ENCODE measurements at regions of chr2 and their contacts with region 1.

Region 1: DNA sequence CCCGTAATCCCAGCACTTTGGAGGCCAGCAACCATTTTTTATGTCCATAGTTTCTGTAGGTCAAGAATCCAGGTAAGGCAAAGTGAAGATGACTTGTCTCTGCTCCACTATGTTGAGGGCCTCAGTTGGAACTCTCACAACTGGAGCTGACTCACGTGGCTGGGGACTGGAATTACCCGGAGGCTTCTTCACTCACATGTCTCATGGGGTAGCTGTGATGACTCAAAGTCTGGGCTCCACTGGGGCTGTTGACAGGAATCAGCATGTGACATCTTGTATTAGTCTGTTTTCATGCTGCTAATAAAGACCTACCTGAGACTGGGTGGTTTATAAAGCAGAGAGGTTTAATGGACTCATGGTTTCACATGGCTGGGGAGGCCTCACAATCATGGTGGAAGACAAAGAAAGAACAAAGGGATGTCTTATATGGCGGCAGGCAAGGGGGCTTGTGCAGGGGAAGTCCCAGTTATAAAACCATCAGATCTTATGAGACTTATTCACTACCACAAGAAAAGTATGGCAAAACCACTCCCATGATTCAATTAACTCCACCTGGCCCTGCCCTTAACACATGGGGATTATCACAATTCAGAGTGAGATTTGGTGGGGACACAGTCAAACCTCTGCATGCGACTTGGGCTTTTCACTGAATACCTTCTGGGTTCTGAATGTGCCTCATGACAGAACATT is 7.8 kb upstream of the PPP1R1C start:
- DNase-seq: peak in 1 of 2 experiments; percentile 15
- H3K4me3 ChIP-seq: no peak overlapping the region
- H3K27ac ChIP-seq: no peak overlapping the region
- H3K4me1 ChIP-seq: no peaks in the 10 kb centered on the region
- H3K27me3 ChIP-seq: no peaks in the 10 kb centered on the region
- CTCF ChIP-seq: no peak

Region 2: DNA sequence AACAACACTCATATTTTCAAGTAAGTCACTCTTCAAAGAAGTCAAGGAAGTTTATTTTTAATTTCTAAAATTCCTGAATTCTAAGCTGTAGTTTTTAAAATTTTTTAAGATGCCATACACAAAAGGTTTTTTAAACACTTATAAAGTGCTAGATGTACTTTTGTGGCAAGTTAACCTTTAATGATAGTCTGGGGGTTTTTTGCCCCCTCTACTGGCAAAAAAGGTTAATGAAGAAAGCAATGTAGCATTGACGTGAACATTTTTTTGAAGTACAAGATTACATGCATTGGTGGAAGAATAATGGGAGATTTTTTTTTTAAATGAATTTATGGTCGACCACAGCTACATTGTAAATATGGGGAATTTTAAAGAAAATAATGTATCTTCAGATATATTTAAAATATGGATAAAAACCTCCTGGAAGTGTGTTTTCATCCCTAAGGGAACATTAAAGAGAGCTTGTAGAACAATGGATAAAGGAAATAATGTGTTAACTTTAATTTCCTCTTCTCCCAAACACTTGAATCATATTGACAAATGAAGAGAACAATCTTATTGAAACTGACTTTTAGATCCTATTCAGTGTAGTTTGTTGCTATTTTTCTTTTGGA is 73.7 kb before region 1 on chr2:
- CTCF ChIA-PET with region 1: no interaction called
- POLR2A ChIA-PET with region 1: no interaction called
- intact Hi-C with region 1: no loop called
- DNase-seq: peak; percentile 15 to 60
- H3K4me3 ChIP-seq: no peak overlapping the region
- H3K27ac ChIP-seq: no peak overlapping the region
- H3K4me1 ChIP-seq: 0 out of 2 replicates have a peak, but pooled peaks cover 9% of the 10 kb centered on the region
- H3K27me3 ChIP-seq: no peaks in the 10 kb centered on the region
- CTCF ChIP-seq: peak; percentile 86

Region 3: GRCh38 chr2:181916726-181917718 is 60.8 kb before region 1 on chr2:
- CTCF ChIA-PET with region 1: no interaction called
- POLR2A ChIA-PET with region 1: interaction called, 10 read pairs
- intact Hi-C with region 1: no loop called
- DNase-seq: no peak
- H3K4me3 ChIP-seq: no peak overlapping the region
- H3K27ac ChIP-seq: peak overlapping the region; percentile 1; the same call in 1 of the 2 replicates
- H3K4me1 ChIP-seq: no peaks in the 10 kb centered on the region
- H3K27me3 ChIP-seq: no peaks in the 10 kb centered on the region
- CTCF ChIP-seq: no peak